Right lobe of liver (tissue), 6 donors: ENCODE measurements at regions of chr6 and their contacts with region 1.

Region 1: GRCh38 chr6:161694995-161695394 is 421.1 kb upstream of the AGPAT4 start:
- DNase-seq: no peak
- ATAC-seq: peak; percentile 89 to 92 (median 91)
- H3K4me3 ChIP-seq: no peak overlapping the region
- H3K27ac ChIP-seq: no peak overlapping the region
- H3K4me1 ChIP-seq: no peaks in the 10 kb centered on the region
- H3K27me3 ChIP-seq: no peaks in the 10 kb centered on the region
- CTCF ChIP-seq: peak; percentile 57 to 77 (median 65)
- POLR2A ChIP-seq: no peak

Region 2: GRCh38 chr6:161418463-161418945 is 276.5 kb before region 1 on chr6:
- intact Hi-C with region 1: loop called in 1 of 2 experiments (anchors 10 kb)
- DNase-seq: no peak
- ATAC-seq: peak; percentile 77 to 89 (median 86)
- H3K4me3 ChIP-seq: no peak overlapping the region
- H3K27ac ChIP-seq: no peak overlapping the region
- H3K4me1 ChIP-seq: no peaks in the 10 kb centered on the region
- H3K27me3 ChIP-seq: no peaks in the 10 kb centered on the region
- CTCF ChIP-seq: peak; percentile 65 to 74 (median 72)
- POLR2A ChIP-seq: no peak

Region 3: DNA sequence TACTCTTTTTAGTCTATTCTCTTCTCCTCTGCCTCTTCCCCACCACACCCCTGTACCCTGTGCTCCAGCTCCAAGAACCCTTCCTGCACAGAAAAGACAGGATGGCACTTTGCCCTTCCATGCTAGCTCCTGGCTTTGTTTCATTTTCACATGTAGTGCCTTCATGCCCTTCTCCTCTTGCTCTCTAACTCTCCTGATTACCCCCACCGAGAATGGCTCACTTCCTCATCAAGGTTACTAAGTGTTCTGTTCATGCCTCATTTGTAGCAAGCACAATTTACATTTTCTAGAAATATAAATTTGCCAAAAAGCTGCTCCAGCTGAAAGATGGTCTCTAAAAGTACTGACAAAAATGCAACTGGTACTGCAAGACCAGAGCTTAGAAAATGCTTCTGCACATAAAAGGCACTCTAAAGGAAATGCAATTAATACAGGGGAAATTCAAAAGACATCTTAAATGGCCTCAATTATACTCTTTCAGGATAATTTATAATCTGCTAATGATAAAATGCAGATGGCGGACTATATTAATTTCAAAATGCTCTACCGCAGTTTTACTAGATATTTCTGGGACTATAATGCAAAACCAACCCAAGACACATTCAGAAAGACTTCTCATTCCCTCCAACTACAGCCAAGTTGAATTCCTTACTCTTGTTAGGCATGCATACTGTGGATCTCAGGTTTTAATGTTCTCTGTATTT is 462.3 kb after region 1 on chr6:
- intact Hi-C with region 1: no loop called
- DNase-seq: no peak
- ATAC-seq: no peak
- H3K4me3 ChIP-seq: no peak overlapping the region
- H3K27ac ChIP-seq: no peak overlapping the region
- H3K4me1 ChIP-seq: no peaks in the 10 kb centered on the region
- H3K27me3 ChIP-seq: no peaks in the 10 kb centered on the region
- CTCF ChIP-seq: no peak
- POLR2A ChIP-seq: no peak